GM12878 (cell line): ENCODE measurements at regions of chr18 and their contacts with region 1.

Region 1: DNA sequence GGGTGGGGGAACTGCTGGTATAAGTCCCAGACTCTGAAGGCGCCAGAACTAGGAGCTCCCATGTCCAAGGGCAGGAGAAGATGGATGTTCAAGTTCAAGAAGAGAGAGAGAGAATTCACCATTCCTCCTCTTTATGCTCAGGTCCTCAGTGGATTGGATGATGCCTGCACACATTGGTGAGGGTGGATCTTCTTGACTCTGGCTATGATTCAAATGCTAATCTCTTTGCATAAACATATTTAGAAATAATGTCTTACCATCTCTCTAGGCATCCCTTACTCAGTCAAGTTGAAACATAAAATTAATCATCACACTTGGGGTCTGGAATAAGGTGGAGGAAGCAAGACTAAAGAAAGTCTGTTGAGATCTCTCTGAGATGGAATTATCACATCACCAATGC is 210.6 kb upstream of the CHST9 start:
- DNase-seq: no peak
- ATAC-seq: no peak
- H3K4me3 ChIP-seq: no peak overlapping the region
- H3K27ac ChIP-seq: no peak overlapping the region
- H3K4me1 ChIP-seq: no peaks in the 10 kb centered on the region
- H3K27me3 ChIP-seq: no peaks in the 10 kb centered on the region
- CTCF ChIP-seq: no peak
- EP300 ChIP-seq: no peak
- POLR2A ChIP-seq: no peak
- RAD21 ChIP-seq: no peak

Region 2: GRCh38 chr18:27331606-27332005 is 64.1 kb before region 1 on chr18:
- CTCF ChIA-PET with region 1: no interaction called
- POLR2A ChIA-PET with region 1: no interaction called
- RAD21 ChIA-PET with region 1: no interaction called
- SMC1A ChIA-PET with region 1: no interaction called
- in situ Hi-C with region 1: no loop called
- intact Hi-C with region 1: loop called (anchors 10 kb)
- DNase-seq: no peak
- ATAC-seq: no peak
- H3K4me3 ChIP-seq: no peak overlapping the region
- H3K27ac ChIP-seq: no peak overlapping the region
- H3K4me1 ChIP-seq: no peaks in the 10 kb centered on the region
- H3K27me3 ChIP-seq: no peaks in the 10 kb centered on the region
- CTCF ChIP-seq: no peak
- EP300 ChIP-seq: no peak
- POLR2A ChIP-seq: no peak
- RAD21 ChIP-seq: no peak

Region 3: DNA sequence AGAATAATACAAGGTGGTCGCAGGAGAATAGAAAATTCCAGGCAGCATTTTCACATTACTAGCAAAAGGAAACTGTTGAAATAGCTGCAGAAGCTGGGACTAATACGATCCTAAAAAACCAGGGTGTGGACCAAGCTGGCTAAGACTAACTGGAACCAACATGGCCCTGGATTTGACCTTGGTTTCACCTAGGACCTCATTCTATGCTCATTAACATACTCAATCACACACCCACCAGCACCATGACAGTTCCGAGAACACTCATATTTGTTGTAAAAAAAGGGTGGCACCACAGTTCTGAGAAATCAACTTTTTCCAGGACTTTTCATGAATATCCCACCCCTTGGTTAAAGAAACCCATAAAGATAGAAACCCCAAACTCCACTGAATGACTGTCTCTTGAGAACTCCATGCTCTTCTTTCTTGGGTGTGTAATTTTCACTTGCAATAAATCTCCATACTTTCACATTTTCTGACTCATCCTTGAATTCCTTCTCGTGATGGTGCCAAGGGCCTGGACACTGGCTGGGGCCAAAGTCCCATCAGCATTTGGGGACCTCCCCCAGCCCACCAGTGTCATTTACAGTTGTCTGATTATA is 46.4 kb before region 1 on chr18:
- CTCF ChIA-PET with region 1: no interaction called
- POLR2A ChIA-PET with region 1: no interaction called
- RAD21 ChIA-PET with region 1: no interaction called
- SMC1A ChIA-PET with region 1: no interaction called
- in situ Hi-C with region 1: no loop called
- intact Hi-C with region 1: no loop called
- DNase-seq: no peak
- ATAC-seq: no peak
- H3K4me3 ChIP-seq: no peak overlapping the region
- H3K27ac ChIP-seq: no peak overlapping the region
- H3K4me1 ChIP-seq: no peaks in the 10 kb centered on the region
- H3K27me3 ChIP-seq: no peaks in the 10 kb centered on the region
- CTCF ChIP-seq: no peak
- EP300 ChIP-seq: no peak
- POLR2A ChIP-seq: no peak
- RAD21 ChIP-seq: no peak

Region 4: DNA sequence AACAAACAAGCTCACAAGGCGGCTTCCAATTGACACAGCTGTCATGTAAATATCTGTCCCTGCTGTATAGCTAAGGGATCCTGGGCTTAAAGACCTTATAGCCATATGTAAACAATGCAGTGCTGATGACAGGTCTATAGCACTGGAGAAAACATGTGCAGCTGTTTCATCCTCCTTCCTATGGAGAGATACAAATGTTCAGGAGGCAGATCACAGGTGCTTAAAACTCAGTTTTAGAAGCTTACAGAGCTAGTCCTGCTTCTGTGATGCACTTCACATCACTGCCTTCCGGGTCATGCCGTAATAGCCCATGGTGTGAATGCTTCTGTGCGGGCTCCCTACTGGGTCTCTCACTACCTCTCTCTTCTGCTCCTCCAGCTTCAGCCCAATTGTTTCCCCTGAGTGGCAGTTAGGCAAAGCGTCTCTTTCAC is 51.7 kb after region 1 on chr18:
- CTCF ChIA-PET with region 1: no interaction called
- POLR2A ChIA-PET with region 1: no interaction called
- RAD21 ChIA-PET with region 1: no interaction called
- SMC1A ChIA-PET with region 1: no interaction called
- in situ Hi-C with region 1: no loop called
- intact Hi-C with region 1: no loop called
- DNase-seq: no peak
- ATAC-seq: no peak
- H3K4me3 ChIP-seq: no peak overlapping the region
- H3K27ac ChIP-seq: no peak overlapping the region
- H3K4me1 ChIP-seq: no peaks in the 10 kb centered on the region
- H3K27me3 ChIP-seq: no peaks in the 10 kb centered on the region
- CTCF ChIP-seq: no peak
- EP300 ChIP-seq: no peak
- POLR2A ChIP-seq: no peak
- RAD21 ChIP-seq: no peak